ENCODE measurements at regions of chr16 and their contacts with region 1.

Region 1: DNA sequence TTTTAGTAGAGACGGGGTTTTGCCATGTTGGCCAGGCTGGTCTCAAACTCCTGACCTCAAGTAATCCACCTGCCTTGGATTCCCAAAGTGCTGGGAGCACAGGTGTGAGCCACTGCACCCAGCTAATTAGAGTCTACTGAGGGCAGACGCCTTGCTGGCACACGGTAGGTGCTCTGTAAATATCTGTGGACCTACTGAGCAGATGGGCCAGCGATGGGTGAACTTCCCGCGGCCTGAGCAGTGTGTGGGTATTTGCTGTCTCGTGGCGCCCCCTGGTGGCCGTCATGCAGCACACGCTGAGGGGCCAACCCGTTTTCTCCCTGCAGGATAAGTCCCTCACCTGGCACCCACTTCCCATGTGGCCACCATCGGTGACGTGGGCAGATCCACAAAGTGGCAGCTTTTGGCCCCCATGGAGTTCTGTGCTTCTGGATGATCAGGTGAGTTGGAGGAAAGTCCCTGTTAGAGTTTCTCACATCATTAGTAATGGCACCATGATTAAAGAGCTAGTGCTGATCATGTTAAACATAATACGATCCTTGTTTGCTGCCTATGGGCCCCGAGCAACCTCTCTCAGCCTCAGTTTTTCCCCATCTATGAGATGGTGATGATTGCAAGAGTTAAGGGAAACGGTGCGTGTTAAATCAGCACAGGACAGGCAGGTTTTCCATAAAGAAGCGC is 40.7 kb downstream of the ZDHHC7 start:
- DNase-seq: peak; percentile 78 to 86 (median 84)
- ATAC-seq: peak; percentile 76
- H3K4me3 ChIP-seq: no peak overlapping the region
- H3K27ac ChIP-seq: no peak overlapping the region
- H3K4me1 ChIP-seq: peaks cover 12% of the 10 kb centered on the region
- H3K27me3 ChIP-seq: no peaks in the 10 kb centered on the region
- CTCF ChIP-seq: peak; percentile 90 to 96 (median 93)
- POLR2A ChIP-seq: no peak

Region 2: GRCh38 chr16:84714028-84714427 is 256.6 kb before region 1 on chr16:
- intact Hi-C with region 1: no loop called
- DNase-seq: no peak
- ATAC-seq: no peak
- H3K4me3 ChIP-seq: no peak overlapping the region
- H3K27ac ChIP-seq: no peak overlapping the region
- H3K4me1 ChIP-seq: peaks cover 28% of the 10 kb centered on the region
- H3K27me3 ChIP-seq: no peaks in the 10 kb centered on the region
- CTCF ChIP-seq: no peak
- POLR2A ChIP-seq: no peak

Region 3: DNA sequence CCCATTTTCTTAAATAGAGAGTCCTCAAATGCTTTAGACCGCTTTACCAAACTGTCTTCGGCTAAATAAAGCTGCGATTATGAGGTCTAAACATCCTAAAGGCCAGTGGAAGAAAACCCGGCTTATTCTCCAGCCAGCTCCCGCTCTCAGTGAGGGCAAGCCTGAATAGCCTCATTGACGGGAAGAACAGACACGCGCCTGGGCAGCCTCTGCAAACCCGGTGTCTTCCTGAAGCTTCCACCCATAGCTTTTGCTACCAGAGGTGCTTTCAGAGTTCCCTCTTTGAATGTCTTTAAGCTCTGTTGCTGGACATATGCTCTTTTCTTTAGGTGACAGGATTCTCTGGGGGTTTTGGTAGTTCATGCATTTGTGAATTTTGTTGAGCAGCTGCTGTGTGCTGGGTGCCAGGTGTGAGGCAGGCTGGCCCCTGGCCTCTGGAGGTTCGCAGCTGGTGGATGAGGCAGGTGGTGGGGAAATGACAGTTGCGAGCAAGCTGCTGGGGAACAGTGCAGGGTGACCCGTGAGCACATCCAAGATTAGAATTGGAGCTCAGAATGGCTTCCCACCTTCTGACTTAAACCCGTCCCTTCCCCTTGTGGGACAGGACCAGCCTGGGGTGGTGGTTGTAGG is 106.1 kb before region 1 on chr16:
- intact Hi-C with region 1: no loop called
- DNase-seq: no peak
- ATAC-seq: no peak
- H3K4me3 ChIP-seq: no peak overlapping the region
- H3K27ac ChIP-seq: no peak overlapping the region
- H3K4me1 ChIP-seq: no peaks in the 10 kb centered on the region
- H3K27me3 ChIP-seq: no peaks in the 10 kb centered on the region
- CTCF ChIP-seq: no peak
- POLR2A ChIP-seq: no peak

Region 4: GRCh38 chr16:84927621-84928591 is 42.7 kb before region 1 on chr16:
- intact Hi-C with region 1: loop called (anchors 2 kb)
- DNase-seq: peak in 2 of 4 donors; percentile 29 to 32
- ATAC-seq: no peak
- H3K4me3 ChIP-seq: no peak overlapping the region
- H3K27ac ChIP-seq: no peak overlapping the region
- H3K4me1 ChIP-seq: peaks cover 11% of the 10 kb centered on the region
- H3K27me3 ChIP-seq: no peaks in the 10 kb centered on the region
- CTCF ChIP-seq: no peak
- POLR2A ChIP-seq: no peak

Region 5: DNA sequence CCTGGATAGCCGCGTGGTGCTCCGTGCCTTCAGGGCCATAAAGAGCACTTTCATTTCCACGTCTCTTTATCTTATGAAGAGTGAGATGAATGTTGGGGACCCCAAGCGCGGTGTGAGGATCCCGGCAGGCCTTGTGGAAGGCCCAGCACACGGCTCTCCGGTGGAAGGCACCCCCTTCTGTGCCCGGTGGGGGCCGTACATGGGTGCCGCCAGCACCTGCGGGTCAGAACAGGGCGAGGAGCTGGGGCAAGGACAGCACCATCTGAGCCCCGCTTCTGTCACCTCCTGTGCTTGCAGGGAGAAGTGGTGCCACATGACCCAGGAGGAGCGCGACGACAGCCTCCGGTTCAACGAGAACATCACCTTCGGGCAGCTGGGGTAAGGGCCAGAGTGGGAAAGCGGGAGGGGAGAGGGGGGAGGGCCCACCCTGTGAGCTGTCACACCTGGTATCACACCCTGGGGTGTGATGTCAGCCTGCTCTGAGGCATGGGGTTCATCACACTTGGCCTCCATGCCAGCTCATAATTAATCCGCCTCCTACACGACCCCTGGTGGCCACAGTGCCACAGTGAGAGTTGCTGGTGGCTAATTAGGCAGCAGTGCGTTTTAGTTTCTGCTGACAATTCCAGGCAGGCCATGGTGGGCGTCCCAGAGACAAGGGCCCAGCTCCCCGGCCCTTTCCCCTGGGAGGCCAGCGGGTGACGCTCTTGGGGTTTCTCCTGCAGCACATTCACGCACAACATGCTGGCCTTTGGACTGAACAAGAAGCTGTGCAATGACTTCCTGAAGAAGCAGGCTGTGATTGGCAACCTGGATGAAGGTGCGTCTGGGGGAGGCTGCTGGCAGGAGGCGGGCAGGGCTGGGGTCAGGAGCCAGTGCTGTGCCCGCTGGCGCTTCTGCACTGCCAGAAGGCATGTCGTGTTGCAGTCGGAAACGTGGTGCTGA is 116.0 kb after region 1 on chr16:
- intact Hi-C with region 1: loop called (anchors 10 kb)
- DNase-seq: peak; percentile 65 to 72 (median 70)
- ATAC-seq: peak; percentile 61
- H3K4me3 ChIP-seq: no peak overlapping the region
- H3K27ac ChIP-seq: no peak overlapping the region
- H3K4me1 ChIP-seq: peaks cover 19% of the 10 kb centered on the region
- H3K27me3 ChIP-seq: no peaks in the 10 kb centered on the region
- CTCF ChIP-seq: peak; percentile 17 to 79 (median 66)
- POLR2A ChIP-seq: no peak